ENCODE measurements at regions of chr6 and their contacts with region 1.

Region 1: GRCh38 chr6:37244430-37245310 is 12.9 kb upstream of the TBC1D22B start:
- DNase-seq: peak; percentile 21 to 52
- H3K4me3 ChIP-seq: no peak overlapping the region
- H3K4me3 Mint-ChIP-seq: no peak overlapping the region
- H3K27ac Mint-ChIP-seq: peak overlapping the region; percentile 60
- H3K4me1 ChIP-seq: peaks cover 44% of the 10 kb centered on the region
- H3K4me1 Mint-ChIP-seq: peaks cover 33% of the 10 kb centered on the region
- H3K27me3 ChIP-seq: no peaks in the 10 kb centered on the region
- H3K27me3 Mint-ChIP-seq: no peaks in the 10 kb centered on the region
- CTCF ChIP-seq: no peak

Region 2: GRCh38 chr6:37155394-37156312 is 89.0 kb before region 1 on chr6:
- CTCF ChIA-PET with region 1: no interaction called
- POLR2A ChIA-PET with region 1: no interaction called
- intact Hi-C with region 1: no loop called
- DNase-seq: no peak
- H3K4me3 ChIP-seq: no peak overlapping the region
- H3K4me3 Mint-ChIP-seq: no peak overlapping the region
- H3K27ac Mint-ChIP-seq: peak overlapping the region; percentile 49
- H3K4me1 ChIP-seq: peaks cover 25% of the 10 kb centered on the region
- H3K4me1 Mint-ChIP-seq: peaks cover 23% of the 10 kb centered on the region
- H3K27me3 ChIP-seq: no peaks in the 10 kb centered on the region
- H3K27me3 Mint-ChIP-seq: no peaks in the 10 kb centered on the region
- CTCF ChIP-seq: no peak

Region 3: DNA sequence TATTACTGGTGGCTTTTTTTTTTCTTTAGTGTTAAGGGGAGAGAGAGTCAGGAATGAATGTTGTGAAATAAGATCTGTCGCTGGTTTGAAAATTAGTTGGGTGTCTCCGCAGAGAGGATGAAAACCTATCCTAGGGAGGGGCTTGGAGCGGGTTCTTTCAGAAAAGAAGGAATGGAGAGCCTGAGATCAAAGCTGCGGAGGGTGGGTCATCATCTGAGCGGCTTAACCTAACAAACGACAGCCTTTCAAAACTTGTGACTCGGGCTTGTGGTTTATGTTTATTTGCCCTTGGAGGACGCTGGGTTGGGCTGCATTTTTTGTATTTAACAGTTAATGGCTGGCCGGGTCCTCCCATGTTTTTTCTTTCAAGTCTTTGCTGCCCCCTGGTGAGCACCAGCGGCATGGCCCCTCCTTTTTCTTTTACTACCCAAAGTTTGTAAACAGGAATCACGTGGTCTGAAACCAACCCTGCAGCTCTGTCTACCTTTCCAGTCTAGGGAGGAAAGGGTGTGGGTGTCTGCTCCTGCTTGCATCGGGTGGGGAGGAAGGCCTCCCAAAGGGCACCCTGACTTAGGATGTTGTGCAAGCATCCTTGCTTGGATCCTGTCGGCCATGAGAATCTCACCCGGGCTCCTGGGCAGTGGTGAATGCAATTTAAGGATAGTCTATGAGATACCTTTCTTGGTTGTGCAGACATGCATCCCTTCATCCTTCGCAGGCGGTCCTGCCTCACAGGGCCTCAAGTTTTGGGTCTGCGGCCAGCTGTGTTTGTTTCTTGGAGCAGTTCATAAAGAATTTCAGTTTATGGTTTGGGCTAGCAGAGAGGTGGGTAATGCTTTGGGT is 72.5 kb before region 1 on chr6:
- CTCF ChIA-PET with region 1: no interaction called
- POLR2A ChIA-PET with region 1: no interaction called
- intact Hi-C with region 1: no loop called
- DNase-seq: peak; percentile 94
- H3K4me3 ChIP-seq: peak overlapping the region; percentile 82
- H3K4me3 Mint-ChIP-seq: peak overlapping the region; percentile 88
- H3K27ac Mint-ChIP-seq: peak overlapping the region; percentile 95
- H3K4me1 ChIP-seq: peaks cover 10% of the 10 kb centered on the region
- H3K4me1 Mint-ChIP-seq: peaks cover 14% of the 10 kb centered on the region
- H3K27me3 ChIP-seq: no peaks in the 10 kb centered on the region
- H3K27me3 Mint-ChIP-seq: no peaks in the 10 kb centered on the region
- CTCF ChIP-seq: peak; percentile 90 to 92

Region 4: GRCh38 chr6:37222125-37222967 is 22.3 kb before region 1 on chr6:
- CTCF ChIA-PET with region 1: no interaction called
- POLR2A ChIA-PET with region 1: no interaction called
- intact Hi-C with region 1: loop called (anchors 1 kb)
- DNase-seq: peak; percentile 93 to 96
- H3K4me3 ChIP-seq: peak overlapping the region; percentile 54
- H3K4me3 Mint-ChIP-seq: peak overlapping the region; percentile 78
- H3K27ac Mint-ChIP-seq: peak overlapping the region; percentile 66
- H3K4me1 ChIP-seq: peaks cover 6% of the 10 kb centered on the region; the same call in 1 of the 2 replicates
- H3K4me1 Mint-ChIP-seq: peaks cover 7% of the 10 kb centered on the region
- H3K27me3 ChIP-seq: no peaks in the 10 kb centered on the region
- H3K27me3 Mint-ChIP-seq: no peaks in the 10 kb centered on the region
- CTCF ChIP-seq: no peak

Region 5: DNA sequence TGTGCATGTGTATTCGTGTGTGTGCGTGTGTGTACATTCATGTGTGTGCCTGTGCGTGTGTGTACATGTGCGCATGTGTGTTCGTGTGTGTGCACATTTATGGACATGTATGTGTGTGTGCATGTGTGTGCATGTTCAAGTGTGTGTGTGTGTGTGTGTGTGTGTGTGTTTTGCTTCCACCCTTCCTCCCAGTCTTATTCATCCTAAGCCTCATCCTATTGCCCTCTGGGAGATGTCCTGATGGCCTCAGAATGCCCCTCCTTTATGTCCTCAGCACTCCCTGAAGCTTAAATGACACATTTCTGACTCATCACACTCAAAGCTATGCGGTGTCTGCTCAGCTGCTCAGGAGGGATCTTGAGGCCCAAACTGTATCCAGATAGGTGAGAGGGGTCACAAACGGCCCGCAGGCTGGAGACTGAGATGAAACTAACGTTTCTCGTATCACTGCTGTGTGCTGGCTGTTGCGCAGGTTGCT is 331.7 kb after region 1 on chr6:
- CTCF ChIA-PET with region 1: no interaction called
- POLR2A ChIA-PET with region 1: no interaction called
- intact Hi-C with region 1: no loop called
- DNase-seq: peak in 1 of 2 experiments; percentile 23
- H3K4me3 ChIP-seq: no peak overlapping the region
- H3K4me3 Mint-ChIP-seq: no peak overlapping the region
- H3K27ac Mint-ChIP-seq: peak overlapping the region; percentile 45
- H3K4me1 ChIP-seq: peaks cover 5% of the 10 kb centered on the region; the same call in 1 of the 2 replicates
- H3K4me1 Mint-ChIP-seq: peaks cover 12% of the 10 kb centered on the region
- H3K27me3 ChIP-seq: no peaks in the 10 kb centered on the region
- H3K27me3 Mint-ChIP-seq: no peaks in the 10 kb centered on the region
- CTCF ChIP-seq: no peak